ENCODE measurements at regions of chr12 and their contacts with region 1.

Region 1: DNA sequence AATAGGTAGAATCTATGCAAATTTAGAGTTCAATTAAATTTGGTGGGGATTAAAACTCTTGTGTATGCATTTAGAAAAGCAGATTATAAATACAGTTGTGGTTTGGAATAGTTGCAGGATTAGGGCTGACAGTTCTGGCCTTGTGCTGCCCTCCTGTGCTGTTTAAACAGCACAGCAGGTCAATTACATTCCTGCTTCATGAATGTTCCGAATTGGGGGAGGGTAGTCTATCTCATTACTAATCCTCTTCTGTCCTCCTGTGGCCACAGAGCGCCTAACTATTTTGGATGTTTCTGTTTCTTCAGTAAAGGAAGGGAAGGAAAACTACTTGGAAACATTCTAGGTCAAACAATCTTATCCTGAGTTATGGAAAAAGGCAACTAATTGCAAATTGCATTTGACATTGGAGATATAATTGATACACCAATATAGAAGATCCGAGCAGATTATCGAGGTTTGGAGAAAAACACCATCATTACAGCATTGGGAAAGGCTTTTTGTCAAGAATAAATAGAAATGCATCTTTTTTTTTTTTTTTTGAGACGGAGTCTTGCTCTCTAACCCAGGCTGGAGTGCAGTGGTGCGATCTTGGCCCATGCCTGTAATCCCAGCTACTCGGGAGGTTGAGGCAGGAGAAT is 8.7 kb upstream of the GPR19 start:
- DNase-seq: no peak
- ATAC-seq: peak; percentile 98

Region 2: DNA sequence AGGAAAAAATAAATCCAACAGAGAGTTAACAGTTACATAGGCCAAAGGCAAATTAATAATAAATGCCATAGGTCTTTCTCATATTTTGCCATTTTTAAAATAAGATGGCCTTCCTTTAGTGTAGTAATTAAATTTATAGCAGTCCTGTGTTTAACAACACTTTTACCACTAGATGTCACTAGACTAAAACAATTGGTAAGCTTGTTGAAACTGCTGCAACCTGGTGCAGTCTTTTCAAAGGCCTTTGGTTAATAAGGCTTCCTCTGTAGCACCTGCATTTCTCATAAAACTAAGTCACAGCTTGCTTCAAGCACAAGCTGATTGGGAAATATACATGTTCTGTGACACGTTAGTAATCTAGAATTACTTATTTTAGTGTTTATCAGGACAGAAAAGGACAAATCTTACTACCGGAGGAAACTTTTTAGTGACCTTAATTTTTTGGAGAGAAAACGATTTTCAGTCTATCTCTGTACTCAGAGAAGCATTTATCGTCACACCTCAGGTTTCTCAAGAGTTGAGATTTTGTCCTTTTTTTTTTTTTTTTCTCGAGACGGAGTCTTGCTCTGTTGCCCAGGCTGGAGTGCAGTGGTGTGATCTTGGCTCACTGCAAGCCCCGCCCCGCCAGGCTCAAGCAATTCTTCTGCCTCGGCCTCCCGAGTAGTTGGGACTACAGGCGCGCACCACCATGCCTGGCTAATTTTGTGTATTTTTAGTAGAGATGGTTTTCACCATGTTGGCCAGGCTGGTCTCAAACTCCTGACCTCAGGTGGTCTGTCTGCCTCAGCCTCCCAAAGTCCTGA is 327.9 kb before region 1 on chr12:
- intact Hi-C with region 1: loop called (anchors 5 kb)
- DNase-seq: peak; percentile 60
- ATAC-seq: peak; percentile 71

Region 3: GRCh38 chr12:12642916-12643315 is 61.8 kb before region 1 on chr12:
- intact Hi-C with region 1: loop called (anchors 5 kb)
- DNase-seq: no peak
- ATAC-seq: no peak

Region 4: GRCh38 chr12:12736759-12737676 is 32.3 kb after region 1 on chr12:
- intact Hi-C with region 1: no loop called
- DNase-seq: no peak
- ATAC-seq: peak; percentile 78

Measured in Right ventricle myocardium inferior (tissue), 1 donor.